ENCODE measurements at regions of chr10 and their contacts with region 1.

Region 1: DNA sequence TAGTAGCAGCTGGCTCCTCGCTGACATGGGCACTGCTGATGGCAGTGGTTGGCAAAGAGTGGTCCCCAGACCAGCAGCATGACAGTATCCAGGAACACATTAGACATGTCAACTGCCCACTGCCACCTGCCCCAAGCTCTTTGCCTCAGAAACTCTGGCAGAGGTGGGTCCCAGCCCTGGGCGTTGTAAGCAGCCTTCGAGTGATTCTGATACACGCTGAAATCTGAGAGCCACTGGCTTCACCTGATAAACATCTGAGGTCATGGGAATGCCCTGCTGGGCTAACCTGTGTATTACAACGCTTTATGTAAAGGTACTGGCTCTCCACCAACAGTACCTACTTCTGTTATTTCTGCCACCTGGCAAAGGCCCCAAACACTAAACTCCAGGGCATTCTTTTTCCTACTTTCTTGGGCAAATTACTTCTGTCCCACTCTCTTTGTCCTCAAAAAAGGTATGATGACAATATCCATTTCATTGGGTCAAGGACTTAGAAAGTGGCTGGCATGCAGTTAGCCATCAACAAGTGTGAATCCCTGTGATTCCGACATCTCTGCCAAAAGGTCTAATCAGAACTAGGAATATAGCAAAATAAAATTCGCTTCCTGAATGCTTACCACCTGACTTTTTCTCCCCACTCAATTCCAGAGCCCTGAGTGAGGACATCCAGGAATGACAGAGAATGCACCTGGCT is 9.2 kb downstream of the SGMS1 start:
- DNase-seq: no peak
- ATAC-seq: peak; percentile 23 to 57 (median 39)
- H3K4me3 ChIP-seq: no peak overlapping the region
- H3K27ac ChIP-seq: peak overlapping the region in 1 of 12 donors; percentile 6
- H3K4me1 ChIP-seq: peaks cover 0 to 61% (median 33%) of the 10 kb centered on the region in 12 donors
- H3K27me3 ChIP-seq: no peaks in the 10 kb centered on the region
- CTCF ChIP-seq: peak in 1 of 12 donors; percentile 28
- POLR2A ChIP-seq: no peak

Region 2: DNA sequence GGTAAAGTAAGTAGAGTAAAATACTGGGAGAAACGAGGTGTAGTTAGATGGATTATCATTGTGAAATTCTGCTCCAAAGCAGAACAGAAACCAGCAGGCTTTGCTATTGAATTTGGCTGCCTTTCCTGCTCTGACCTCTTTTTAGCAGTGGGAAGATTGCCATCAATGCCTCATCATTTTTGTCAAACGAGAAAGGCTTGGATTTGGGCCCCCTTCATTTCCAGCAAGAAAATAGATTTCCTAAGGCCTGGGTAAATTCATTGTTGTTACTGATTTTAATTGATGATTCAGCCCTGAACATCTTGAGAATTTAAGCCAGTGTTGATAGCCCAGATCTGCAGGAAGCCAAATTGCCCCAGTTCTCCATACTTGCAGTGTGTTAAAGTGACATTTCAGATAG is 328.1 kb before region 1 on chr10:
- intact Hi-C with region 1: no loop called
- DNase-seq: no peak
- ATAC-seq: no peak
- H3K4me3 ChIP-seq: no peak overlapping the region
- H3K27ac ChIP-seq: no peak overlapping the region
- H3K4me1 ChIP-seq: peaks cover 0 to 11% (median 0%) of the 10 kb centered on the region in 12 donors
- H3K27me3 ChIP-seq: no peaks in the 10 kb centered on the region
- CTCF ChIP-seq: no peak
- POLR2A ChIP-seq: no peak

Region 3: DNA sequence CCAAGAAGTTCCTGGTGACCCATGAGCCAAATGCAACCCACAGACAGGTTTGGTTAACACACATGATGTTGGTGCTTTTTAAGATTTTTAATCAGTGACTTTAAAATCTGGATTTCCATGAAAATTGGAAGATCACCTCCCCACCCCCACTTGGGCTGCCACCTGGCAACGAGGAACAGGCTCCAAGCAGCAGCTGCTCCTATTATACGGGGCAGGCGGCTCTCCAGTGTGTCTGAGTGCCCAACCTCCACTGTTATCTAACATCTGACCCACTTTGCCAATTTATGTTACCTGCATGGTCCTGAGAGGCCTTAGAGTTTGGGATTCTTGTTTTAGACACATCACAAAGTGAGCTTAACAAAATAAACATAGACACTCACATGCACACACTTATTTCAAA is 47.2 kb before region 1 on chr10:
- intact Hi-C with region 1: loop called in 1 of 10 experiments (anchors 5 kb)
- DNase-seq: no peak
- ATAC-seq: peak in 1 of 4 donors; percentile 55
- H3K4me3 ChIP-seq: no peak overlapping the region
- H3K27ac ChIP-seq: no peak overlapping the region
- H3K4me1 ChIP-seq: peaks cover 0 to 16% (median 6%) of the 10 kb centered on the region in 12 donors
- H3K27me3 ChIP-seq: no peaks in the 10 kb centered on the region
- CTCF ChIP-seq: no peak
- POLR2A ChIP-seq: no peak

Region 4: GRCh38 chr10:50577681-50578350 is 36.8 kb before region 1 on chr10:
- intact Hi-C with region 1: loop called in 1 of 10 experiments (anchors 5 kb)
- DNase-seq: peak in 3 of 5 donors; percentile 30 to 65 (median 40)
- ATAC-seq: peak; percentile 79 to 96 (median 86)
- H3K4me3 ChIP-seq: peak overlapping the region in 4 of 12 donors; percentile 7 to 17 (median 11)
- H3K27ac ChIP-seq: peak overlapping the region in 10 of 12 donors; percentile 52 to 68 (median 62)
- H3K4me1 ChIP-seq: peaks cover 0 to 52% (median 34%) of the 10 kb centered on the region in 12 donors
- H3K27me3 ChIP-seq: no peaks in the 10 kb centered on the region
- CTCF ChIP-seq: no peak
- POLR2A ChIP-seq: no peak

Region 5: DNA sequence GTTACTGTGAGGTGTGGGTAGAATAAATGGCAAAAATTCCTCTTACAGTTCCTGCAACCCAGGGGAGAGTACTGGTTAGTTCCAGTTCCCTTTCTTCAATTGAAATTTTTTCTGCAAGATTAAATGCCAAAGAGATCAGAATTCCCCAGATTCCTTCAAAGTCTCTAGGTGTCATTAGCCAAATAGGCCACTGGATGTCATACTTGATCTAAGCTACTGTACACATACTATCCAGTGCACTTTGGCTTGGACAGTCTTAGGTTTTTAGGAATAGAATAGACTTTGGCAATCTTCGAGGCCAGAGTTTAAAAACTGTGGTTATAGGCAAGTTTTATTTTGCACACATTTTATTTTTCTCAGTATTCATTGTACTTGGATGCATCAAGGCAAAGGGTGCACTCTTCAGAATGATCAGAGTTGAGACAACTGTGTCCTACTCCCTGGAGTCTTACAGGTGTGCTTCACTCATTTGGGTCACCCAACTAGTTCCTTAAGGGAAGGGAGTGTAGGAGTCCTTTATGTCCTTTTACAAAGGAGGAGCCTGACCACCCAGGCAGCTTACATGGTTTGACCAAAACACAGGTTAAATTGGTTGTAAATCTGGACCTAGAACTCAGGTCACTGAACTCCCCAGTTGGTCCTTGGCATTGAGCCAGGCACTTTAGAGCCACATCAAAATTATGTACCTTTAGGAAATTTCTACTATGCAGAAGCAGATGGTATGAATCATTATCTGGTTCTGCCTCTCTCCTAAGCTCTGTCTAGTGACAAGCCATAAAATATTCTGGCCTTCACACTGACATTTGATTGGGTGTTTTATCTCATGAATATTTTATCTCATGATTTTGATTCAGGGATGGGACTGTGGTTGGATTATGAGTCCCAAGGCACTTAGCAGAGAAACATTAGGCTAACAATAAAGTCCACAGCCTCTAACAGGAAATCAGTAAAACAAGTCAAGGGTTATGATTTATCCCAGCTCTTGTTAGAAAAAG is 174.7 kb after region 1 on chr10:
- intact Hi-C with region 1: no loop called
- DNase-seq: no peak
- ATAC-seq: peak in 3 of 4 donors; percentile 53 to 74 (median 61)
- H3K4me3 ChIP-seq: no peak overlapping the region
- H3K27ac ChIP-seq: no peak overlapping the region
- H3K4me1 ChIP-seq: peaks cover 0 to 5% (median 0%) of the 10 kb centered on the region in 12 donors
- H3K27me3 ChIP-seq: no peaks in the 10 kb centered on the region
- CTCF ChIP-seq: peak in 11 of 12 donors; percentile 16 to 50 (median 38)
- POLR2A ChIP-seq: no peak

Measured in heart left ventricle (tissue), 16 donors.